ENCODE measurements at regions of chr11 and their contacts with region 1.

Region 1: DNA sequence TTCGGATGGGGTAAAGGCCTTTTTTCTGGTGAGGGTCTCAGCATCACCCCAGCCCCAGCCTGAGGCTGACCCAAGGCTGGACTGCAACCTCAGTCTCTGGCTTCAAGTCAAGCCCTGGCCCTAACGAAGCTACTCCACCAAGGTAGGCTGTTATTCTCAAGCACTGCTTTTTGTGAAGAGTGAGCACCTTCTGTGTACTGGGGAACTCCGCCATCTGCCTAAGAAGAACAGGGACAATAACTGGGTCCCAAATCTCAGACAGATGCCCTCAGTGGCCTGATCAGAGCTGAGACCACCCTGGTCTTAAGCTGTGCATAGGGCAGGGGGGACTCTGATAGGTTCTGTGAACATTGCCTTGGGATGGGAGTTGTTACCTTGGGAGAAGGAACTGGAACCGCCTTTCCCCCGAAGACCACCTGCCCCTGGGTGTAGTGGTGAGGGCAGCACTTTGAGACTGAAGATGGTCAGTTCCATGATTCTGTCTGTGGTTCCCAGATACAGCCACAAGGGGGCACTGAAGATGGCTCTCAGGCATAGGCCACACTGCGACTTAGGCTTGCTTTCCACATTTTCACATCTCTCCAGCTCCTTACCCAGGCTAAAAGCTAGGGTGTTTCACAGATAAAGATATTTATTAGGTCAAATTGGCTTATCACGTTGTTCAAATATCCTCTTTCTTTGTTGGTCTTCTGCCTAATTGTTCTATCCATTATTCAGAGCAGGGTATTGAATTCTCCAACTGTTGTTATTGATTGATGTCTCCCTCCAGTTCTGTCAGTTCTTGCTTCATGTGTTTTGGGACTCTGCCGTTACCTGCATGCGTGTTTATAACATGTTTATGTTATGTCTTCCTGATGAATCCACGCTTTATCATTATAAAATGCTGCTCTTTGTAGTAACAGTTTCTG is 11.8 kb upstream of the UVRAG start:
- DNase-seq: peak; percentile 63
- ATAC-seq: peak; percentile 93
- H3K4me3 ChIP-seq: no peak overlapping the region
- H3K27ac ChIP-seq: no peak overlapping the region
- H3K4me1 ChIP-seq: peaks cover 16% of the 10 kb centered on the region
- H3K27me3 ChIP-seq: no peaks in the 10 kb centered on the region
- CTCF ChIP-seq: peak; percentile 93
- EP300 ChIP-seq: no peak
- POLR2A ChIP-seq: no peak
- RAD21 ChIP-seq: peak; percentile 87

Region 2: DNA sequence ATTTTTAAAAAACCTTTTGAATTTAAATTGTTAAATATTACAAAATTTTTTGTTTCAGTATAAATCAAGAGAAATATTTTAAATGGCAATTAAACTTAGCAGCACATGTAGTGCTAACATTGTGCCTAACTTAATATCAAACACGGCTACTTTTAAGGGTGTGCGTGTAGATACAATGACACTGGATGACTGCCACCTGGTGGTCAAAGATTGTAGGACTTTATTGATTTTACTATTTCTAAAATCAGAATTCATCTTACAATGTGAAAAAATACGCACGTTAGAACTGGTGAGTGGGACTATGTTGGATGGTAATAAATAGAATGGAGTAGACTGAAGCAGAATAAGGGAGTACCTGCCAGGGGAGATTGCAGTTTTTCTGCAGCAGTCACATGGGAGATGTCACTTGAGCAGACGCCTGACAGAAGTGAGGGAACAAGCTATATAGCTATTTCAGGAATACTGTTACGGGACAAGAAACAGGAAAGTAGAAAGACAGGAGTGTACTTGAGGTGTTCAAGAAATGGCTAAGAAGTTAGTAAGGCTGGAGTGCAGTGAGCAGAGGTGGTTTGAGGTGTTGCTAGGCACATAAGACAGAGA is 64.7 kb after region 1 on chr11:
- CTCF ChIA-PET with region 1: interaction called, 36 read pairs
- POLR2A ChIA-PET with region 1: no interaction called
- in situ Hi-C with region 1: no loop called
- intact Hi-C with region 1: loop called (anchors 1 kb)
- DNase-seq: peak; percentile 43
- ATAC-seq: peak; percentile 47; the same call in 2 of the 3 replicates
- H3K4me3 ChIP-seq: no peak overlapping the region
- H3K27ac ChIP-seq: no peak overlapping the region
- H3K4me1 ChIP-seq: no peaks in the 10 kb centered on the region
- H3K27me3 ChIP-seq: no peaks in the 10 kb centered on the region
- CTCF ChIP-seq: peak; percentile 71
- EP300 ChIP-seq: no peak
- POLR2A ChIP-seq: no peak
- RAD21 ChIP-seq: peak; percentile 68

Region 3: DNA sequence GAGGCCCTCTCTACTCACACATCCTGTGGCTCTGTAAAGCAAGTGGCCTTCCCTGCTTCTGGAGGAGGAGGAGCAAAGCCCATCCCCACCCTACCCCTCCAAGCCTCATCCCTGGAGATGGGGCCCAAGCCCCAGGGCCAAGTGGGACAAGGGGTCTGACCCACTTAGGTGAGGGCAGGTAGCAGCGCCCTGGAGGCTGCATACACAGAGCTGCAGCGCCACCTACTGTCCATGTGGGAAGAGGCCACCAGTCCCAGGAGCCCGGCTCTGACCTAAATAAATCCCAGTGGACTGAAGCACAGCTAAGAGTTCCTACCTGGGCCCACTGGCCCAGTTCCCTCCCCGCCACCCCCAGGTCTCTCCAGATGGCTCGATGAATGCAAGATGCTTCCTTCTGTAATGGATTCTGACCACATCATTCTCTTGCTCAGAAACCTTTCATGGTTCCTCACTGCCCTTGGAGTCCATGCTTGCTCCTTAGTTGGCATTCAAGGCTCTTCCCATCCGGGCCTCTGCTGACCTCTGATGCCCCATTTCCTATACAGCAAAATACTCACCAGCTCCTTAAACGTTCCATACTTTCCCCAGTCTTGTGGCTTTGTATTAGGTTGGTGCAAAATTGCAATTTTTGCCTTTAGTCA is 515.7 kb after region 1 on chr11:
- CTCF ChIA-PET with region 1: no interaction called
- POLR2A ChIA-PET with region 1: no interaction called
- in situ Hi-C with region 1: no loop called
- intact Hi-C with region 1: loop called (anchors 5 kb)
- DNase-seq: peak; percentile 64
- ATAC-seq: peak; percentile 92
- H3K4me3 ChIP-seq: no peak overlapping the region
- H3K27ac ChIP-seq: no peak overlapping the region
- H3K4me1 ChIP-seq: peaks cover 13% of the 10 kb centered on the region
- H3K27me3 ChIP-seq: peaks cover 3 to 10% of the 10 kb centered on the region in 2 experiments; a peak in 3 of 5 replicates
- CTCF ChIP-seq: peak; percentile 97
- EP300 ChIP-seq: no peak
- POLR2A ChIP-seq: no peak
- RAD21 ChIP-seq: peak; percentile 96